Activated CD4-positive, alpha-beta memory T cell treated with anti-CD3 and anti-CD28 coated beads for 36 hours (primary cell): ENCODE measurements at regions of chr1 and their contacts with region 1.

Region 1: GRCh38 chr1:51192213-51192843 is 43.7 kb upstream of the RNF11 start:
- DNase-seq: peak; percentile 63
- H3K4me3 Mint-ChIP-seq: no peak overlapping the region
- H3K27ac Mint-ChIP-seq: no peak overlapping the region
- H3K4me1 Mint-ChIP-seq: no peaks in the 10 kb centered on the region
- H3K27me3 Mint-ChIP-seq: peaks cover 4% of the 10 kb centered on the region

Region 2: DNA sequence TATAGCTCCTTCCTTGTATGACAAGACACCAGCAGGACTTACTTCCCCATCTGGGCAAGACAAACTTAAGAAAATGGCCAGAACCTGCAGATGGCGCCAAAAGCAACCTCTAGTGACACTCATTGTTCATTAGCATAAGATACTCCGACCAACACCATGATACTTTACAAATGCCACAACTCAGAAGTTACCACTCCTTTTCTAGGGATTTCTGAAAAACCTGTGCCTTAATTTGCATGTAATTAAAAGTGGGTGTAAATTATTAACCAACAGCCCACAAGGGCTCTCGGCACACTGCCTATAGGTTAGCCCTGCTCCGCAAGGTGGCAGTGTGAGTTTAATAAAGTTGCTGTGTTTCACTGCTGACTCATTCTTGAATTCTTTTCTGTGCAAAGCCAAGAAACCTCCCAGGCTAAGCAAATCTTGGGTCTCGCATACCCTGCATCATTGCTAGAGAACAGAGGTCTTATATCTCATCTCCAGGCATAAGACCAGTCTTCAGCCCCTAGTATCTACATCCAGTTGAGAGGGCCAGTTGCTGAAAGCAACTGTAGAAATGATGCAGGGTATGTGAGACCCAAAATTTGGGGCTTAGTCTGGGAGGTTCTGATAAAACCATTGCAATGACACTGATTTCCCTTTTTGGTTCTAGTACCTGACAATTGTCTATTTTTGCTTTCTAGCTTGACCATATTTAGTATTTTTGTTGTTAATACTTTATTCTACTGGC is 318.7 kb before region 1 on chr1:
- CTCF ChIA-PET with region 1: interaction called, 131 read pairs
- POLR2A ChIA-PET with region 1: no interaction called
- intact Hi-C with region 1: loop called (anchors 1 kb)
- DNase-seq: peak; percentile 82
- H3K4me3 Mint-ChIP-seq: peak overlapping the region; percentile 54
- H3K27ac Mint-ChIP-seq: no peak overlapping the region
- H3K4me1 Mint-ChIP-seq: peaks cover 6% of the 10 kb centered on the region
- H3K27me3 Mint-ChIP-seq: no peaks in the 10 kb centered on the region

Region 3: GRCh38 chr1:50968158-50968820 is 224.0 kb before region 1 on chr1:
- CTCF ChIA-PET with region 1: interaction called, 5 read pairs
- POLR2A ChIA-PET with region 1: no interaction called
- intact Hi-C with region 1: loop called (anchors 10 kb)
- DNase-seq: peak; percentile 86
- H3K4me3 Mint-ChIP-seq: peak overlapping the region; percentile 88
- H3K27ac Mint-ChIP-seq: peak overlapping the region; percentile 97
- H3K4me1 Mint-ChIP-seq: peaks cover 26% of the 10 kb centered on the region
- H3K27me3 Mint-ChIP-seq: peaks cover 12% of the 10 kb centered on the region

Region 4: DNA sequence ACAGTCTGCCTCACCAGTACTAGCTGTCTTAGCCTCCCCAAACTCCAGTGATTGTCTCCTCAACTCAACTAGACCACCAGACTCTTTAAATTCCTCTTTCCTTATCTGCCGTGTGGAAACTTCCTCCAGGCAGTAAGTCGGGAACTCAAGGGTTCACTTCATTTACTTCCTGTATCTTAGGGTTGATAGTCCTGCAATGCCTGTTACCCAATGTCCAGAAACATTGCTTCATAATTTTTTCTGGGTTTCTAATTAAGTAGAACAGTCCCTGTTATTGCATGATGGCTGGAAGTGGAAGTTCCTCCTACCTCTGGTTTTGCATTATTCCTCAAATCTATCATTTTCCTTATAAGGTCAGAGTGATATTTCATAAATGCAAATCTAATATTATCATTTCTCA is 17.1 kb before region 1 on chr1:
- CTCF ChIA-PET with region 1: interaction called, 62 read pairs
- POLR2A ChIA-PET with region 1: no interaction called
- intact Hi-C with region 1: no loop called
- DNase-seq: no peak
- H3K4me3 Mint-ChIP-seq: no peak overlapping the region
- H3K27ac Mint-ChIP-seq: no peak overlapping the region
- H3K4me1 Mint-ChIP-seq: peaks cover 3% of the 10 kb centered on the region
- H3K27me3 Mint-ChIP-seq: peaks cover 39% of the 10 kb centered on the region

Region 5: DNA sequence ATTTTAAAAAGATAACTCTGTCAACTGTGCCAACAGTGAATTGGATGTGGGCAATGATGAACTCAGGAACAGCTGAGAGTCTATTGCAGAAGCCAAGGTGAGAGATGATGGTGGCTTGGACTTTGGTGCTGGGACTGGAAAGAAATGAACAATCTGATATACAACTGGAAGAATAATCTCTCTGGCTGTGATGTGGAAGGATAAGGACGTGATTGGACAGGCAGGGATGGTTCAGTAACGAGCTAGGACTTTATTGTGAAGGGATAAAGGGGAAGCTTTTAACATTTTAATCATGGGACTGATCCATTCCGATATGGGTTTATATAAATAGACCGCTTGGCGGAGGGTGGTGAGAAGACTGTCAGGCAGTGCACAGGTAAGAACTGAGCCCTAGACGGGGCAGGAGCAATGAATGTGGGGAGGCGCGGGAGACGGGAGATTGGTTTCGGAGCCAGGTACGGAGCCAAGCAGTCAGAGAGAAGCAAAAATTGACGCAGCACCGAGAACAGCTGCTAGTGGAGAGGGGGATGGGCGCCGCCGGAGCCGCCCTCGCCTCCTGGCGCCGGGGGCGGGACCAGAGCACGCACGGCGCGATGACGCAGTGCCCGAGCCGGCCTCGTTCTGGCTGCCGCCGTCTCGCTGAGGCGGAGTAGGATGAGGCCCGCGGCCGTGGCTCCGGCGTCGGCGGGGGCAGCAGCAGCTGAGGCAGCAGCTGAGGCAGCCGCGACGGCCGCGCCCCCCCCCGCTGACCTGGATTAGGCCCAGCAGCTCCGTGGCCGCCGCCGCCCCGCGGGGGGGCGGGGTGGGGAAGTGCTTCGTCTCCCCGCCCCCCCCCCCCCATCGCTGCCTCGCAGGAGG is 43.6 kb after region 1 on chr1 and contains the start of gene RNF11:
- CTCF ChIA-PET with region 1: interaction called, 10 read pairs
- POLR2A ChIA-PET with region 1: no interaction called
- intact Hi-C with region 1: no loop called
- DNase-seq: peak; percentile 94
- H3K4me3 Mint-ChIP-seq: peak within 1 kb of the TSS; percentile 89
- H3K27ac Mint-ChIP-seq: peak within 1 kb of the TSS; percentile 81
- H3K4me1 Mint-ChIP-seq: peaks cover 38% of the 10 kb centered on the region
- H3K27me3 Mint-ChIP-seq: no peaks in the 10 kb centered on the region
- total RNA-seq, gene RNF11: 26.3 to 31.9 TPM